Activated T-helper 1 cell treated with anti-CD3 and anti-CD28 coated beads, Interleukin-12 subunit alpha, Interleukin-12 subunit beta, Interleukin-2, Interleukin-4 antibody, amounts not matched to agents 30 ng/mL and 10 ng/mL and 1 ng/mL, durations not matched to agents 14 hours and 24 hours and 36 hours (primary cell): ENCODE measurements at regions of chr19 and their contacts with region 1.

Region 1: GRCh38 chr19:52962394-52963246 is at the start of gene ZNF816:
- DNase-seq: peak; percentile 99
- H3K4me3 Mint-ChIP-seq: peak within 1 kb of the TSS; percentile 98
- H3K27ac Mint-ChIP-seq: peak within 1 kb of the TSS; percentile 93
- H3K4me1 Mint-ChIP-seq: peaks cover 25% of the 10 kb centered on the region
- H3K27me3 Mint-ChIP-seq: no peaks in the 10 kb centered on the region
- total RNA-seq, gene ZNF816: 7.0 and 9.4 TPM in 2 replicates

Region 2: DNA sequence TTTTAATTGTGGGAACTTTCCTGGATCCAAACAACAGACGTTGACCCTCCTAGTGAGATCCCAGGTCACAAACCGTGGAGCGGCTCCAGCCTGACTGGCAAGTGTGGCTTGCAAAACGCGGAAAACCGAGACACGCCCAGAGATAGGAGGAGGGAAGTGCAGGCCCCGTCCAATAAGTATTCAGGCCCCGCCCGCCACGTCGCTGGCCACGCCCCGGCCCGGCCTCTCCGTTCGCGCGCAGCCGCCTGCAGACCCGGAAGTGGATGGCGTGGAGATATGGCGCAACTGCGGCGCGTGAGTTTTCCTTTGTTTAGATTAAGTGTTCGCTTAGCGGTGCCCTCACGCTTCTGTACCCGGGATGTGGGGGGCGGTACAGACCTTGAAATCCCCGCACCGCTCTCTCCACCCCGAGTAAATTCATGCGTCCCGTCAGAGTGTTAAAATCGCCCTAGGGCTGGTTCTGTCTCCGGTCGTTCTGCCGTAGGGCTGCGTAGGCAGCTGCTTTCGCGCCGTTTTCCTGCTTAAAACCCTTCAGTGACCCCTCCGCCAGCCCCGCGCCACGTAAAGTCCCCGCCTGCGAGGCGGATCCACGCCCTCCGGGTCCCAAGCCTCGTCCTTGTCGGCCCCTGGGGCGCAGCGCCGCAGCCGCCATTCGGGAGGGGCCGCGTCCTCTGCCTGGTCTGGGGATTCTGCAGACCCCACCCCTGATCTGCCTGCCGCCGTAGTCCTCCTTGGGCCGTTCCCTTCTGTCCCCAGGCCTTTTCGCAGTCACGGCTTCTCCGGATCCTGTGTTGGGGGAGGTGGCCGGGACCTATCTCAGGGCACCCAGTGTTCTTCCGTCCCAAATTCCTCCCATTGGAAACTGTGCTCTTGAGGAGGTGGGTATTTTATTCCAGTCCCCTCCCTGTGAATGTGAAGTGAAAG is 693.0 kb before region 1 on chr19 and contains the start of gene ZNF766:
- intact Hi-C with region 1: loop called (anchors 1 kb)
- DNase-seq: peak; percentile 96
- H3K4me3 Mint-ChIP-seq: peak within 1 kb of the TSS; percentile 98
- H3K27ac Mint-ChIP-seq: peak within 1 kb of the TSS; percentile 95
- H3K4me1 Mint-ChIP-seq: peaks cover 24% of the 10 kb centered on the region
- H3K27me3 Mint-ChIP-seq: no peaks in the 10 kb centered on the region
- total RNA-seq, gene ZNF766: 13.8 and 16.5 TPM in 2 replicates

Region 3: DNA sequence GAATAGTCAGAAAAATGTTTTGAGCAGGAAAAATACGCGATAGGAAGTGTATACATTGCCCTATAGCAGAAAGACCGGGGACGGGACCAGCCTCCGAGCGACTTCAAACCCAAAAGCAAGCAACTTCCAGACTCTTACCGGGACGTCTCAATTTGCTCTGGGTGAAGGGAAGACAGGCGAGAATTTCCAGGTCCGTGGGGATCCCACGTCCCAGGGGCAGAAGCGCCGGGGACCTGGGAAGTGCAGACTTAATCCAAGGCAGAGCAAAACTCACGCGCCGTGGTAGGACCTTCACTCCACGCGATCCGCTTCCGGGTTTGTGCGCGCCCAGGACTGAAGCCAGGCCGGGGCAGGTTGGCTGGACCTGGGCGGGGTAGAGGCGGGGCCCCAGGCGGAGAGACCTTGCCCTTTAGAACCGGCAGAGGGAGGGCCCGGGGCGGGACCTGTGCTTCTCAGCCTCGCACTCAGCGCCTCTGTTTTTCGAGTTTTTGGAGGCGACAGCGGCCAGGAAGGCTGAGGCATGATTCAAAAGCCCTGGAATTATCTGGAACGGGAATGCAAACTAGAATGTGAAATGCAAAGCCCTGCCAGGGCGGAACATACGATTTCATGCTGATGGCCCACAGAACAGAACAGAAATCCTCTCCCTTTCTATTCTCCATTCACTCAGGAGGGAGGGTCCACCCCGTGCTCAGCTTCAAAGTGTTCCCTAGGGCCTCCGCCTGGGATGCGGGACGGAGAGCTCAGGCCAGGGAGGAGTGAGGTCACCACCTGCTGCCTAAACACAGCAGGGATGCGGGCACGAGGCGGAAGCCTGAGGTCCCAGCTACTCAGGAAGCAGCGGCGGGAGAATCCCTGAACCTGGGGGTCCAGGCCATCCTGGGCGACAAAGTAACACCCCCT is 175.9 kb before region 1 on chr19 and contains the start of gene ZNF600:
- intact Hi-C with region 1: loop called (anchors 1 kb)
- DNase-seq: peak; percentile 52
- H3K4me3 Mint-ChIP-seq: peak within 1 kb of the TSS; percentile 90
- H3K27ac Mint-ChIP-seq: peak within 1 kb of the TSS; percentile 75
- H3K4me1 Mint-ChIP-seq: peaks cover 26% of the 10 kb centered on the region
- H3K27me3 Mint-ChIP-seq: no peaks in the 10 kb centered on the region
- total RNA-seq, gene ZNF600: 11.9 and 13.4 TPM in 2 replicates

Region 4: DNA sequence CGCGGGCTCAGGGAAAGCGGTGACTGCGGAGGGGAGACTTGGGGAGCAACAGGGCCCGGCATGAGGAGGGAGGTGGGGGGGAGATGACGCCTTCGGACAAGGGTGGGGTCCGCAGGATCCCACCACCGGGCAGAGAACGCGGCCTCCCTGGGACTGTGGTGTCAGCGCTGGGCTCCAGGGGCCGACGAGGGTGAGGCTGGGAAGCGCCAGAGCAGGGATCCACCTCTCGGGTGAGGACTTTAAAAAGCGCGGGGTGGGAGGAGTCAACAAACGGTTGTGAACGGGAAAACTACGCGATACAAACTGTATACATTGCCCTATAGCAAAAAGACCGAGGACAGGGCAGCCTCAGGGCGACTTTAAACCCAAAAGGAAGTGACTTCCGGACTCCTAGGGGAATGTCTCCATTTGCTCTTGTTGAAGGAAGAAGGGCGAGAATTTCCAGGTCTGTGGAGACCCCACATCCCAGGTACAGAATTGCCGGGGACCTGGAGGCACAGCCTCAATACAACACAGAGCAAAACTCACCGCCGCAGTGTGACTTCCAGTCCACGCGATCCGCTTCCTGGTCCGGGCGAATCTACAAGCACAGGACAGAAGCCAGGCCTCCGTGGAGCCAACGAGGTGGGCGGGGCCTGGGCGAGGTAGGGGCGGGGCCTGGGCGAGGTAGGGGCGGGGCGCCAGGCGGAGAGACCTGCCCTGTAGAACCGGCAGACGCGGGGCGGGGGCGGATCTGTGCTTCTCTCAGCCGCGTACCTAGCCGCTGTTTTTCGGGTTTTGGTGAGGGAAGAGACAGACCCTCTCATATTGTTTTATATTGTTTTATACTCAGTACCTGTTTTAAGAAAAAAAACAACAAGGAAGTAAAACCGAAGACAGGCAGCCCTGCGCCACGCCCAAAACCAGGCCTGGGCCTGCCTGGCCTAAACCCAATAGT is 39.5 kb before region 1 on chr19 and contains the start of gene ZNF888:
- intact Hi-C with region 1: loop called (anchors 2 kb)
- DNase-seq: peak; percentile 77
- H3K4me3 Mint-ChIP-seq: peak within 1 kb of the TSS; percentile 93
- H3K27ac Mint-ChIP-seq: peak within 1 kb of the TSS; percentile 96
- H3K4me1 Mint-ChIP-seq: peaks cover 31% of the 10 kb centered on the region
- H3K27me3 Mint-ChIP-seq: no peaks in the 10 kb centered on the region
- total RNA-seq, gene ZNF888: 4.2 and 4.6 TPM in 2 replicates

Region 5: GRCh38 chr19:53333463-53334449 is 371.1 kb after region 1 on chr19 and contains the start of gene ZNF845:
- intact Hi-C with region 1: loop called (anchors 2 kb)
- DNase-seq: peak; percentile 95
- H3K4me3 Mint-ChIP-seq: peak within 1 kb of the TSS; percentile 91
- H3K27ac Mint-ChIP-seq: peak within 1 kb of the TSS; percentile 80
- H3K4me1 Mint-ChIP-seq: peaks cover 10% of the 10 kb centered on the region
- H3K27me3 Mint-ChIP-seq: no peaks in the 10 kb centered on the region
- total RNA-seq, gene ZNF845: 6.5 and 6.7 TPM in 2 replicates

Region 6: DNA sequence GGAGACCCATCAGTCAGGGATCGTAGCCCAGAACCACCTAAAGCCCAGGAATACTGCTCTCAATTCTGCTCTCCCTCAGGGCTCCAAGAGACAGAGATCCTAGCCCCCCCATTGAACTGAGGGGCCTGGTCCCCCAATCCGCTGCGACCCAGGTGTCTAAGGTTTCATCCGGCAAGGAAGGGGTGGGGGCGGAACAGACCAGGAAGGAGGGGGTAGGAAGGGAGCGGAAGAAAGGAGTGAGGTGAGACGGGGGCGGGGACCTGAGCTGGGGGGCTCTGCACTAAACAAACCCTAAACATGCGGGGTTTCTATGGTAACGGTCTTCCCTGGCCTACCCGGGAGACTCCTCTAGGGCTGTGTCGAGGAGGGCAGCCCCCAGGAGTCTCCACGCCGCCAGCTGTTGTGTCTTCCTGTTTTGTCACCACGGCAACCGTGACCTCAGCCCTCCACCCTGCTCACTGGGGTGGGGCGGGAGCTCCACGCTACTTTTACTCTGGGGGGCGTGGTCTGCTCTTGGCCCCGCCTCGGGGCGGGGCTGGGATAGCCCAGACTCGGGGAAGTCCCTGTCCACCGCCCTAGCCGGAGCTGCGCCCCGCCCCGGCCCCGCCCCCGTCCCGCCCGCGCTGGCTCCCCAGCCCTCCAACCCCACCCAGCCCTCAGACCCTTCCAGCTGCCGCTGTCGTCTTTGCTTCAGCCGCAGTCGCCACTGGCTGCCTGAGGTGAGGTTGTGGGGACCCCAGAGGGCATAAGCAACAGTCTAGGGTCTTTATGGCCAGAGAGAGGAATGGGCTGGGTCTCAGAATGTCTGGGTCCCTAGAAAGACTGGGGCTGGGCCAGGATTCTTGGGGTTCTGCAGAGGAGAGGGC is 904.8 kb after region 1 on chr19 and contains the start of gene MYADM:
- intact Hi-C with region 1: loop called (anchors 10 kb)
- DNase-seq: peak; percentile 100
- H3K4me3 Mint-ChIP-seq: peak within 1 kb of the TSS; percentile 94
- H3K27ac Mint-ChIP-seq: peak within 1 kb of the TSS; percentile 96
- H3K4me1 Mint-ChIP-seq: peaks cover 37% of the 10 kb centered on the region
- H3K27me3 Mint-ChIP-seq: peaks cover 3% of the 10 kb centered on the region
- total RNA-seq, gene MYADM: 58.8 and 63.1 TPM in 2 replicates